Activated CD4-positive, alpha-beta T cell treated with anti-CD3 and anti-CD28 coated beads for 36 hours (primary cell): ENCODE measurements at regions of chrX and their contacts with region 1.

Region 1: GRCh38 chrX:54182864-54183608 is at the start of gene FAM120C:
- DNase-seq: peak; percentile 80
- ATAC-seq: peak; percentile 73
- H3K4me3 Mint-ChIP-seq: peak within 1 kb of the TSS; percentile 81
- H3K27ac Mint-ChIP-seq: peak within 1 kb of the TSS; percentile 87
- H3K4me1 Mint-ChIP-seq: peaks cover 39% of the 10 kb centered on the region
- H3K27me3 Mint-ChIP-seq: no peaks in the 10 kb centered on the region
- total RNA-seq, gene FAM120C: 6.6 to 8.3 TPM

Region 2: GRCh38 chrX:53081925-53082772 is 1100.9 kb before region 1 on chrX and contains the start of gene TSPYL2:
- CTCF ChIA-PET with region 1: no interaction called
- POLR2A ChIA-PET with region 1: no interaction called
- intact Hi-C with region 1: loop called in 1 of 2 experiments (anchors 10 kb)
- DNase-seq: peak; percentile 96
- ATAC-seq: peak; percentile 91
- H3K4me3 Mint-ChIP-seq: peak within 1 kb of the TSS; percentile 91
- H3K27ac Mint-ChIP-seq: peak within 1 kb of the TSS; percentile 95
- H3K4me1 Mint-ChIP-seq: peaks cover 46% of the 10 kb centered on the region
- H3K27me3 Mint-ChIP-seq: no peaks in the 10 kb centered on the region
- total RNA-seq, gene TSPYL2: 56.7 to 73.3 TPM

Region 3: GRCh38 chrX:53683556-53684414 is 499.3 kb before region 1 on chrX:
- CTCF ChIA-PET with region 1: no interaction called
- POLR2A ChIA-PET with region 1: no interaction called
- intact Hi-C with region 1: loop called (anchors 1 to 2 kb)
- DNase-seq: peak; percentile 94
- ATAC-seq: peak; percentile 76
- H3K4me3 Mint-ChIP-seq: peak overlapping the region; percentile 80
- H3K27ac Mint-ChIP-seq: peak overlapping the region; percentile 93
- H3K4me1 Mint-ChIP-seq: peaks cover 28% of the 10 kb centered on the region
- H3K27me3 Mint-ChIP-seq: no peaks in the 10 kb centered on the region

Region 4: GRCh38 chrX:54357414-54358377 is 174.7 kb after region 1 on chrX and contains the start of gene WNK3:
- CTCF ChIA-PET with region 1: no interaction called
- POLR2A ChIA-PET with region 1: no interaction called
- intact Hi-C with region 1: loop called in 1 of 2 experiments (anchors 1 kb)
- DNase-seq: peak; percentile 72
- ATAC-seq: peak; percentile 71
- H3K4me3 Mint-ChIP-seq: peak within 1 kb of the TSS; percentile 77
- H3K27ac Mint-ChIP-seq: peak within 1 kb of the TSS; percentile 65
- H3K4me1 Mint-ChIP-seq: peaks cover 17% of the 10 kb centered on the region
- H3K27me3 Mint-ChIP-seq: peaks cover 23% of the 10 kb centered on the region
- total RNA-seq, gene WNK3: 0.74 to 1.1 TPM

Region 5: DNA sequence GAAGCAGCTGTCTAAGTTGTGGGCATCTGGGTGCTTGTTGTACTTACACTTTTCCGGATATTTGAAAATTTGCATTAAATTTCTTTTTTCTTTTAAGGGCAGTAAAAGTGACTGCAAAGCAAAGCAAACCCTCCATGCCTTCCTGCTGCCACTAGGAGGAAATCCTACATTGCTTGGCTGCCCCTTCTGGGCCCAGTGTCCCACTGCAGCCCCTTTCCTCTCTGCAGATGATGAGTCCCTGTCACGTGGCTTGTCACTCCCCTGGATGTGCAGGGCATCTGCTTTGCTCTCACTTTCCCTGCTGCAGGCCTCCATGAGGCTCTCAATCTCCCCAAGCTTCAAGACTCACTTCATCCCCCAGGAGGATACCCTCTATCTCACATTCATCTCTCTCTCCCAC is 269.9 kb after region 1 on chrX:
- CTCF ChIA-PET with region 1: no interaction called
- POLR2A ChIA-PET with region 1: no interaction called
- intact Hi-C with region 1: no loop called
- DNase-seq: no peak
- ATAC-seq: peak; percentile 26
- H3K4me3 Mint-ChIP-seq: no peak overlapping the region
- H3K27ac Mint-ChIP-seq: no peak overlapping the region
- H3K4me1 Mint-ChIP-seq: no peaks in the 10 kb centered on the region
- H3K27me3 Mint-ChIP-seq: no peaks in the 10 kb centered on the region

Region 6: GRCh38 chrX:54529552-54530357 is 346.7 kb after region 1 on chrX and contains the start of gene GNL3L:
- CTCF ChIA-PET with region 1: no interaction called
- POLR2A ChIA-PET with region 1: no interaction called
- intact Hi-C with region 1: loop called in 1 of 2 experiments (anchors 1 kb)
- DNase-seq: peak; percentile 89
- ATAC-seq: peak; percentile 88
- H3K4me3 Mint-ChIP-seq: peak within 1 kb of the TSS; percentile 90
- H3K27ac Mint-ChIP-seq: peak within 1 kb of the TSS; percentile 90
- H3K4me1 Mint-ChIP-seq: peaks cover 26% of the 10 kb centered on the region
- H3K27me3 Mint-ChIP-seq: no peaks in the 10 kb centered on the region
- total RNA-seq, gene GNL3L: 62.5 to 62.8 TPM

Region 7: DNA sequence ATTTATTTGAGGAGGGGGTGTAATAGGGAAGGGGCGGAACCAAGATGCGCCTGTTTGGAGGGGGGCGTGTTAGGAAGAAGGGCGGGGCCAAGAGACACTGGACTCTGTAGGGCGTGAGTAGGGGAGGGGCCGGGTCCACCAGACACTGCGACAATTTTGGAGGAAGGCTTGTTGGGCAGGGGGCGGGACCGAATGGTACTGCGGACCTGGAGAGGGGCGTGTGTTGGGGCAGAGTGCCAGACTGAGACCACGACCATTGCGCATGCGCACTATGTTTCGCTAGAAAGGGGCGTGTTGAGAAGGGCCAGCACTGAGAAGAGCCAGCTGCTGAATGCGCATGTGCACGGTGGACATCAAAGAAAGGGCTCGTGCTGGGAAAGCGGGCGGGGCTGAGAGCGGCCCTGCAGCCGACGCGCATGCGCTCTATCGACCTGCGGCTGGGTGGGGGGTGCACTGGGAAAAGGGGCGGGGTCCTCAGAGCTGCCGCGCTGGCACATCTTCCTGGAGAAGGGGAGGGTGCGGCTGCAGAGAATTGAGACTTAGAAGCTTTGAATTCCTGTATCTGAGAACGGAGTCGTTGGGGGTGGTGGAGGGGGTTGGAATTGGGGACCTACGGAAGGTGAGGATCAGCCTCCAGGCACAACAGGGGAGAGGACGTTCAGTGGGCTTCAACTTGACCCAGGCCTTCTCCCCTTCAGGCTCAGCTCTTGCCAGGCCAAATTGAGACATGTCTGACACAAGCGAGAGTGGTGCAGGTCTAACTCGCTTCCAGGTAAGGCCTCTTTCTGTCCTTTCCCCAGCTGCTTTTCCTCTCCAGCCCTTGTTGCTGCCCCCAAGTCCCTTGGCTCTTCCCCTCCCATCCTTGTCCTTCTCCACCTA is 625.8 kb after region 1 on chrX:
- CTCF ChIA-PET with region 1: no interaction called
- POLR2A ChIA-PET with region 1: no interaction called
- intact Hi-C with region 1: loop called in 1 of 2 experiments (anchors 2 kb)
- DNase-seq: peak; percentile 93
- ATAC-seq: peak; percentile 92
- H3K4me3 Mint-ChIP-seq: peak overlapping the region; percentile 87
- H3K27ac Mint-ChIP-seq: peak overlapping the region; percentile 89
- H3K4me1 Mint-ChIP-seq: peaks cover 16% of the 10 kb centered on the region
- H3K27me3 Mint-ChIP-seq: no peaks in the 10 kb centered on the region

Region 8: GRCh38 chrX:55160685-55161552 is 977.9 kb after region 1 on chrX:
- CTCF ChIA-PET with region 1: no interaction called
- POLR2A ChIA-PET with region 1: no interaction called
- intact Hi-C with region 1: loop called in 1 of 2 experiments (anchors 2 kb)
- DNase-seq: peak; percentile 93
- ATAC-seq: peak; percentile 96
- H3K4me3 Mint-ChIP-seq: peak overlapping the region; percentile 79
- H3K27ac Mint-ChIP-seq: peak overlapping the region; percentile 89
- H3K4me1 Mint-ChIP-seq: peaks cover 10% of the 10 kb centered on the region
- H3K27me3 Mint-ChIP-seq: no peaks in the 10 kb centered on the region